Calu3 (cell line): ENCODE measurements at regions of chr4 and their contacts with region 1.

Region 1: GRCh38 chr4:40514497-40514951 is 115.1 kb downstream of the RBM47 start:
- DNase-seq: peak; percentile 48
- H3K4me3 Mint-ChIP-seq: peak overlapping the region; percentile 80
- H3K27ac Mint-ChIP-seq: peak overlapping the region; percentile 93
- H3K4me1 Mint-ChIP-seq: peaks cover 42% of the 10 kb centered on the region
- H3K27me3 Mint-ChIP-seq: no peaks in the 10 kb centered on the region
- CTCF ChIP-seq: no peak

Region 2: DNA sequence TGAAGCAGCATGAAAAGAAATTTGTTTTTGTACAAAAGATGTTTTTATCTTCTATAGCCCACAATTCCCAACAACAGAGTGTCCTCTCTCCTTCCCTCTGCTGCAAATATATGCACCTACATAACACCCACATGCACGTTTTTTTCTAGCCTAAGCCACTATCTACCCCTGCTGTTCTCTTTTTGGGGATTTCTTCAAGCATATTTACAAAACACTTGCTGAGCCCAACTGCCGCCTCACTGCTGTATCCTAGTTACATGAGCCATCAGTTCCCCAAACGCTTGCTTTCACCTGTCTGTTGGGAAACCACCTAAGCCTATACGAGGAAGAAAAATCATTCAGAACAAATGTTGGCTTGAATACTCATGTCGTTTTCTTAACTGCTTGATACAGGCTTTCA is 52.2 kb before region 1 on chr4:
- CTCF ChIA-PET with region 1: no interaction called
- intact Hi-C with region 1: no loop called
- DNase-seq: no peak
- H3K4me3 Mint-ChIP-seq: peak overlapping the region; percentile 36
- H3K27ac Mint-ChIP-seq: no peak overlapping the region
- H3K4me1 Mint-ChIP-seq: peaks cover 11% of the 10 kb centered on the region
- H3K27me3 Mint-ChIP-seq: no peaks in the 10 kb centered on the region
- CTCF ChIP-seq: no peak

Region 3: GRCh38 chr4:40475609-40476008 is 38.9 kb before region 1 on chr4:
- CTCF ChIA-PET with region 1: interaction called, 3 read pairs
- intact Hi-C with region 1: loop called (anchors 5 kb)
- DNase-seq: peak; percentile 34
- H3K4me3 Mint-ChIP-seq: peak overlapping the region; percentile 62
- H3K27ac Mint-ChIP-seq: peak overlapping the region; percentile 69
- H3K4me1 Mint-ChIP-seq: peaks cover 43% of the 10 kb centered on the region
- H3K27me3 Mint-ChIP-seq: no peaks in the 10 kb centered on the region
- CTCF ChIP-seq: no peak

Region 4: DNA sequence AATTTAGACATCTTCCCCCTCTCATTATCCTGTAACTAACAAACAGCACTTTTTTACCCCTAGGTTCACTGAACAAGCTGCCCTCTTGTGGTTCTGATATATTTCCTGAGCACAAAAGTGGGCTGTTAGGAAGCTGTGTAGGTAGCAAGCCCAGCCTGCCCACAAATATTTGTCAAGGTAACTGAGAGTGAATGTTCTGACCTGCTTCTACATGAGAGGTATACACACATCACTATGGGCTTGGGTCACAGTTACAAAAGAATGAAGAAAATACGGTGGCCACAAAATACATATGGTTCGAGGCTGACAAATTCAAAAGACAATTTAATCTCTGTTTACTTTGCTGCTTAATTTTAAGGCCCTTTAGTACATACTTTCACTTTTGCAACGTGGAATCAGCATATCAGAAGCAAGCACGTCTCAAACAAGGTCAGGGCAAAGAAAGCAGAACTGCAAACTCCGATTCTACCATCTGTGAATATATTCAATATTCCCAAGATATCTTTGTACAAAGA is 36.5 kb after region 1 on chr4:
- CTCF ChIA-PET with region 1: no interaction called
- intact Hi-C with region 1: loop called (anchors 5 kb)
- DNase-seq: peak; percentile 17
- H3K4me3 Mint-ChIP-seq: peak overlapping the region; percentile 59
- H3K27ac Mint-ChIP-seq: no peak overlapping the region
- H3K4me1 Mint-ChIP-seq: peaks cover 36% of the 10 kb centered on the region
- H3K27me3 Mint-ChIP-seq: no peaks in the 10 kb centered on the region
- CTCF ChIP-seq: no peak

Region 5: GRCh38 chr4:40564004-40564403 is 49.5 kb after region 1 on chr4:
- CTCF ChIA-PET with region 1: no interaction called
- intact Hi-C with region 1: no loop called
- DNase-seq: no peak
- H3K4me3 Mint-ChIP-seq: no peak overlapping the region
- H3K27ac Mint-ChIP-seq: no peak overlapping the region
- H3K4me1 Mint-ChIP-seq: peaks cover 53% of the 10 kb centered on the region
- H3K27me3 Mint-ChIP-seq: no peaks in the 10 kb centered on the region
- CTCF ChIP-seq: no peak

Region 6: GRCh38 chr4:40629401-40630334 is 115.1 kb after region 1 on chr4 and contains the start of gene RBM47:
- CTCF ChIA-PET with region 1: no interaction called
- intact Hi-C with region 1: loop called (anchors 5 kb)
- DNase-seq: peak; percentile 78
- H3K4me3 Mint-ChIP-seq: peak within 1 kb of the TSS; percentile 94
- H3K27ac Mint-ChIP-seq: peak within 1 kb of the TSS; percentile 98
- H3K4me1 Mint-ChIP-seq: peaks cover 21% of the 10 kb centered on the region
- H3K27me3 Mint-ChIP-seq: no peaks in the 10 kb centered on the region
- CTCF ChIP-seq: no peak
- total RNA-seq, gene RBM47: 86.6 and 106 TPM in 2 replicates